ENCODE measurements at regions of chr4 and their contacts with region 1.

Region 1: DNA sequence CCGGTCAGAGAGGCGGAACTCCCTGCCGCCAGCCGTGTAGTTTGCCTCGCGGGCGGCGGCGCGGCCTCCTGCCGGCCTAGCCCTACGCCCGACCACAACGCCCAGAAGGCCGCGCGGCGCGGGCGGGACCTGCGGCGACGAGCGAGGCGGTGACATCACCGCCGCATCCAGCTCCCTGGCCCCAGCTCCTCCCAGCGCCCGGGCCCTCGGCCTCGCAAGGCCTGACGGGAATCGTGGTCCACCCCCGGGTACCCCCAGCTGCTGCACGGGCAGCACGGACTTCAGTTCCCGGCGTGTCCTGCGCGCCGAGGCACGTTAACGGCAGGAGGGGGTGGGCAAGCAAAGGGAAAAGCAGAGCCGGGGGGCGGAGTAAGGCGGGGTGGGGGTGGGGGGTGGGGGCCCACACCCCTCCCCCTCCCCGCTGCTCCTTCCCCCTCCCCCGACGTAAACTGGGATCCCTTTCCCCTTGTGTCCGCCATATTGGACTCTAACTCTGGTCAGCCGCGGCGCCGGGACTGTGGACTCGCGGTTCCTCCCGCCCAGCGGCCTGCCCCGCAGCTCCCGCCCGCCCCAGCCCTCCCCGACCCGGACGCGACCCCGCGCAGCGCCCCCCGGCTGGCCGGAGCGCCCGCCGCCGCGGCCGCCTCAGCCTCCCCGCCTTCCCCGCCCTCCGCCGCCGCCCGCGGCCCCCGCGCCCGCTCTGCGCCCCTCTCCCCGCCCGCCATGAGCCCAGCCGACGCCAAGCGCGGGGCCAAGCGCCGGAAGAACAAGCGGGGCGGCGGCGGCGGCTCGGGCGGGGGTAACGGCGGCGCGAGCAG is at the start of gene FAM193A:
- DNase-seq: peak; percentile 100
- ATAC-seq: peak; percentile 100
- H3K4me3 ChIP-seq: peak within 1 kb of the TSS; percentile 96 to 97
- H3K27ac ChIP-seq: peak within 1 kb of the TSS; percentile 93 to 95
- H3K4me1 ChIP-seq: no peaks in the 10 kb centered on the region
- H3K27me3 ChIP-seq: no peaks in the 10 kb centered on the region
- total RNA-seq, gene FAM193A: 23.8 to 41.6 TPM

Region 2: GRCh38 chr4:2418650-2419571 is 117.5 kb before region 1 on chr4 and contains the start of gene CFAP99:
- intact Hi-C with region 1: loop called in 1 of 2 experiments (anchors 2 kb)
- DNase-seq: peak; percentile 99
- ATAC-seq: peak; percentile 96
- H3K4me3 ChIP-seq: peak within 1 kb of the TSS; percentile 77 to 91
- H3K27ac ChIP-seq: no peak within 1 kb of the TSS
- H3K4me1 ChIP-seq: peaks cover 0 to 3% of the 10 kb centered on the region in 2 donors
- H3K27me3 ChIP-seq: no peaks in the 10 kb centered on the region
- total RNA-seq, gene CFAP99: 0.13 TPM in 1 of 2 donors, not detected in the other

Region 3: DNA sequence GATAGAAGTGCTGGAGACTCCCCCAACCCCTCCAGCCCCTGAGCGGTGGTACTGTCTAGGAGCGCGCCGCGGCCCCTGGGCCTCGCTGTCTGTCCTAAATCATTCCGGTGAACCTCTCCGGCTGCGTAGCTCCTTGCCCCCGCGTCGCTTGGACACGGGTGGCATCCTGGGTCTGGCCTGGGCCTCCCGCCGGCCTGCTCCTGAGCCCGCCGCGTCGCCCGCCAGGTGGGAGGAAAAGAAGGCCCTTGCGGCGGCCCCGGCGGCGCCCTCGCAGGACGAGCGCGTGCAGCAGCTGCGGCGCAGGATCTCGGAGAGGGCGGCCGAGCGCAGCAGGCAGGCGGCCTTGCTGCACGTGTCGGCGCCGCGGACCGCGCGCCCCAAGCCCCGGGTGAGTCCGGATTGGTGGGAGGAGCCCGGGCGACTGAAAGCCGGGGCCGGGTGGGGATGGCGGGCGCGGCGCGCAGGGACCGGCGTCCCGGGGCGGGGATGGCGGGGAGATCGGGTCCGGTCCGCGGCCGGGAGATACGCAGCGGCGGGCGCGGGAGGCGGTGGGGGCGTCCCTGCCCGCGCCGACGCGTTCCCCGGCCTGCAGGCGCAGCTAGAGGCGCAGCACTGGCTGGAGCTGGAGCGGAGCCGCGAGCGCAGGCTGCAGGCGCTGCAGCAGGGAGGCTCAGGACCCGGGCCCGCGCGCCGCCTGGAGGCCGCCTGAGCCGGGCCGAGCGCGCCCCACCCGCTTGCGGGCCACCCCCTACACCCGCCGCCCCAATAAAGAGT is 74.0 kb before region 1 on chr4:
- intact Hi-C with region 1: no loop called
- DNase-seq: peak; percentile 78 to 88
- ATAC-seq: peak; percentile 85
- H3K4me3 ChIP-seq: peak overlapping the region; percentile 45 to 71
- H3K27ac ChIP-seq: peak overlapping the region in 1 of 2 donors; percentile 8
- H3K4me1 ChIP-seq: no peaks in the 10 kb centered on the region
- H3K27me3 ChIP-seq: no peaks in the 10 kb centered on the region

Region 4: GRCh38 chr4:2624782-2625530 is 88.6 kb after region 1 on chr4:
- intact Hi-C with region 1: loop called in 1 of 2 experiments (anchors 5 kb)
- DNase-seq: peak in 1 of 2 donors; percentile 68
- ATAC-seq: no peak
- H3K4me3 ChIP-seq: no peak overlapping the region
- H3K27ac ChIP-seq: no peak overlapping the region
- H3K4me1 ChIP-seq: peaks cover 0 to 3% of the 10 kb centered on the region in 2 donors
- H3K27me3 ChIP-seq: no peaks in the 10 kb centered on the region

Region 5: GRCh38 chr4:2714061-2714770 is 177.8 kb after region 1 on chr4:
- intact Hi-C with region 1: loop called in 1 of 2 experiments (anchors 10 kb)
- DNase-seq: peak in 1 of 2 donors; percentile 70
- ATAC-seq: peak; percentile 75
- H3K4me3 ChIP-seq: no peak overlapping the region
- H3K27ac ChIP-seq: peak overlapping the region in 1 of 2 donors; percentile 29
- H3K4me1 ChIP-seq: no peaks in the 10 kb centered on the region
- H3K27me3 ChIP-seq: no peaks in the 10 kb centered on the region